Lower leg skin (tissue), 4 donors: ENCODE measurements at regions of chr5 and their contacts with region 1.

Region 1: DNA sequence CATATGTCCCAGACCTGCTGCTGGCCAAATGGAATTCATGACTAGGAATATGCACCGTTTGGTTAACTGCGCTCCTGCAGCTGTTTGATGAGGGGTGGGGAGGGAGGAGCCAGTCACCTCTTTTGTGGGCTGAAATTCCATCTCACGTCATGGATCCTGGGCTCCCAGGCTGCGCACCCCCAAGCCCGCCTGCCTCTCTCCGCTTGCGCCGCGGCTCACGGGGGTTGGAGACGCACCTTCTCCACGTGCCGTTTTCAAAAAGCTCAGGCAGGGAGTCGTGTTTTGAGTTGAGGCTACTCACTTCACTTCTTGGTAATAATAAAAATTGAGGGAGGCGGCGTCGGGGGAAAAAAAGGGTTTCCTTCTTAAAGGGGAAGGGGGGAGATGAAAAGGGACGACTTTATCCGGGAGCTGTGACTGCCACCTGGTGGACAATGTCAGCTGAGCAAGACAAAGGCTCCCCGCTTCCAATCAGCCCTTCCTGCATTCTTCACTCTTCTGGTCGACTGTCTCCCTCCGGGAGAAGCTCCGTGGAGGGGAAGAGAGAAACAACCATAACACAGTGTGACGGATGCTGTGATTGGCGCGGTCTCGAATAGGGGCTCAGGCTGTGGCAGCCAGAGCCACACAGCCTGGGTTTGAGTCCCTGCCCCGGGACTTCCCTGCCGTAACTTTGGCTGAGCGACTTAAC is 15.9 kb upstream of the C5orf47 start:
- DNase-seq: peak; percentile 84 to 96
- H3K4me3 ChIP-seq: peak overlapping the region; percentile 6
- CTCF ChIP-seq: peak in 1 of 3 donors; percentile 91
- POLR2A ChIP-seq: no peak

Region 2: DNA sequence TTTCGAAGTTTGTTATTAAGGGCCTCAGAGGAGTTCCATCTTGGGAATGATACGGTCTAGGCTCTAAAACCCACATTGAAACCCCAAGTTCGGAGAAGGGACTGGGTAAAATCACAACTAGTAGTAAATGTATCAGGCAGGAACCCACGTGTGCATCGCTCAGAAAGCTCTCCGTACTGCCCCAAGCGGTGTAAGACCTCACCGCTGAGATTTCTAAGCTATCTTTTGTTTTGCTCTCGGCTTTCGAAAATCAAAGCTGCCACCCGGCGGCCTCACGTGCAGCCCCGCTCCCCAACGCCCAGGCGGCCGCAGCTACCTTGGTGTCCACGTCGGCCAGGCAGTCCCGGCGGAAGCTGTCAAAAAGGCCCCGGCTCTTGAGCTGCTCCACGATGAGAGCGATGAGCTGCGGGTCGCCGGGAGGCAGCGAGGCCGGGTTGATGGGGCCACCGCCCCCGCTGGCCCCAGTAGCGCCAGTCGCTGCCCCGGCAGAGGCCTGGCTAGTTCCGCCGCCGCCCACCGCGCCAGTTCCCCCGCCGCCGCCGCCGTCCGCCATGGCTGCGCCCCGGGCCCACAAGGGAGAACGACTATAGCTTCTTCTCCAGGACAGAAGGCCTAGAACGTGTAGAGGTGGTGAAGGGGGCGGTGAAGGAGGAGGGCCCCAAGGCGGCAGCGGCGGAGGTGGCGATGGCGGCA is 357.0 kb before region 1 on chr5:
- intact Hi-C with region 1: loop called (anchors 5 kb)
- DNase-seq: peak; percentile 71 to 90
- H3K4me3 ChIP-seq: peak overlapping the region; percentile 93
- CTCF ChIP-seq: no peak
- POLR2A ChIP-seq: no peak